ENCODE measurements at regions of chr16 and their contacts with region 1.

Region 1: DNA sequence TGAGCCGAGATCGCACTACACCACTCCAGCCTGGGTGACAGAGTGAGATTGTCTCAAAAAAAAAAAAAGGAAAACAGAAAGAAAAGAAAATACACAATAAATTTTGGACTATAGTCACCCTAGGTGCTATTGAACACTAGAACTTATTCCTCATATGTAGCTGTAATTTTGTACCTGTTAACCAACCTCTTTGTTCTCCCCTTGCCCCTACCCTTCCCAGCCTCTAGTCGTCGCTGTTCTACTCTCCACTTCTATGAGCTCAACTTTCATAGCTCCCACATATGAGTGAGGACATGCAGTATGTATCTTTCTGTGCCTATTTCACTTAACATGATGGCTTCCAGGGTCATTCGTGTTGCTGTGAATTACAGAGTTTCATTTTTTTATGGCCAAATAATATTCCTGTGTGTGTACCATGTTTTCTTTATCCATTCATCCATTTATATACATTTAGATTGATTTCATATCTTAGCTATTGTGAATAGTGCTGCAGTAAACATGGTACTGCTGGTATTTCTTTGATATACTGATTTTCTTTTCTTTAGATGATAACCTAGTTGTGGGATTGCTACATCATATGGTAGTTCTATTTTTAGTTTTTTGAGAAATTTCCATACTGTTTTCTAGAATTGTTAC is 28.3 kb downstream of the VPS35L start:
- DNase-seq: peak; percentile 51
- H3K4me3 ChIP-seq: no peak overlapping the region
- H3K27ac ChIP-seq: no peak overlapping the region
- H3K4me1 ChIP-seq: no peaks in the 10 kb centered on the region
- H3K27me3 ChIP-seq: no peaks in the 10 kb centered on the region
- CTCF ChIP-seq: peak; percentile 69
- EP300 ChIP-seq: no peak
- RAD21 ChIP-seq: peak; percentile 57

Region 2: GRCh38 chr16:19555162-19555937 is 28.4 kb before region 1 on chr16 and contains the start of gene VPS35L:
- CTCF ChIA-PET with region 1: interaction called, 10 read pairs
- POLR2A ChIA-PET with region 1: no interaction called
- DNase-seq: peak; percentile 93
- H3K4me3 ChIP-seq: peak within 1 kb of the TSS; percentile 73 to 86
- H3K27ac ChIP-seq: peak within 1 kb of the TSS; percentile 88 to 91
- H3K4me1 ChIP-seq: peaks cover 0 to 4% of the 10 kb centered on the region in 2 experiments; a peak in 1 of 4 replicates
- H3K27me3 ChIP-seq: no peaks in the 10 kb centered on the region
- CTCF ChIP-seq: peak; percentile 68
- EP300 ChIP-seq: no peak
- RAD21 ChIP-seq: peak; percentile 22; the same call in 1 of the 2 replicates
- polyA plus RNA-seq, gene VPS35L: 24.8 and 35.3 TPM in 2 replicates

Region 3: DNA sequence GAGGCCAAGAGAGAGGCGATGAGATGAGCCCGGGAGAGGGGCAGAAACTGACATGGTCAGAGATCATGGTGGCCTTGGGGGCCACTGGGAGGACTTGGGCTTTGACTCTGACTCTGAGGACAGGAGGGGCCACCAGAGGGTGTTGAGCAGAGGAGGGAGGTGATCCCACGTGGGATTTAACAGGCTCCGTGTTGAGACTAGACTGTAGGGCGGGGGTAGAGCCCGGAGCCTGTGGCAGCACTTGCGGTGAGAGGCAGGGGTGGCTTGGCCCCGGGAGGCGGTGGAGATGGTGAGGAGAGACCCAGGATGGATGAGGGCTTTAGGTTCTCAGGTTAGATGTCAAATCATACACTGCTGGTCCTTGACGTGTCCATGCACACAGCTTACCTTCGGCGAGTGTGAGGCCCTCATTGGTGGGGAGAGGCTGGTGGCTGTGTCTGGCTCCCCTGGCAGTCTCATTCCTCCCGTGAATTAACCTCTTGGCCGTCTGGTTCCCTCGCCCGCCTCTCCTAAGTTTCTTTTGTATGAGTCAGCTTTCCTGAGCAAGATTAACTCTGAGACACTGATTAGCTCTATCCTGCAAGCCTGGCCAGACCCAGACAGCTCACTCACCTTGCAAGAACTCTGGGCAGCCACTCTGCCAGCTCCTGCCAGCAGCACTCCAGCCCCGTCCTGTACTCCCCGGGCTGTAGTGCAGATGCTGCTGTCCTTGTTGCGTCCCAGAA is 11.4 kb after region 1 on chr16:
- CTCF ChIA-PET with region 1: interaction called, 27 read pairs
- POLR2A ChIA-PET with region 1: no interaction called
- DNase-seq: peak; percentile 10
- H3K4me3 ChIP-seq: no peak overlapping the region
- H3K27ac ChIP-seq: peak overlapping the region; percentile 45 to 78; a peak in 3 of 4 replicates
- H3K4me1 ChIP-seq: peaks cover 0 to 15% of the 10 kb centered on the region in 2 experiments; a peak in 3 of 4 replicates
- H3K27me3 ChIP-seq: no peaks in the 10 kb centered on the region
- CTCF ChIP-seq: no peak
- EP300 ChIP-seq: 0 out of 4 replicates have a peak, but pooled peaks of 1 of the 2 experiments have one; percentile 41
- RAD21 ChIP-seq: no peak

Region 4: DNA sequence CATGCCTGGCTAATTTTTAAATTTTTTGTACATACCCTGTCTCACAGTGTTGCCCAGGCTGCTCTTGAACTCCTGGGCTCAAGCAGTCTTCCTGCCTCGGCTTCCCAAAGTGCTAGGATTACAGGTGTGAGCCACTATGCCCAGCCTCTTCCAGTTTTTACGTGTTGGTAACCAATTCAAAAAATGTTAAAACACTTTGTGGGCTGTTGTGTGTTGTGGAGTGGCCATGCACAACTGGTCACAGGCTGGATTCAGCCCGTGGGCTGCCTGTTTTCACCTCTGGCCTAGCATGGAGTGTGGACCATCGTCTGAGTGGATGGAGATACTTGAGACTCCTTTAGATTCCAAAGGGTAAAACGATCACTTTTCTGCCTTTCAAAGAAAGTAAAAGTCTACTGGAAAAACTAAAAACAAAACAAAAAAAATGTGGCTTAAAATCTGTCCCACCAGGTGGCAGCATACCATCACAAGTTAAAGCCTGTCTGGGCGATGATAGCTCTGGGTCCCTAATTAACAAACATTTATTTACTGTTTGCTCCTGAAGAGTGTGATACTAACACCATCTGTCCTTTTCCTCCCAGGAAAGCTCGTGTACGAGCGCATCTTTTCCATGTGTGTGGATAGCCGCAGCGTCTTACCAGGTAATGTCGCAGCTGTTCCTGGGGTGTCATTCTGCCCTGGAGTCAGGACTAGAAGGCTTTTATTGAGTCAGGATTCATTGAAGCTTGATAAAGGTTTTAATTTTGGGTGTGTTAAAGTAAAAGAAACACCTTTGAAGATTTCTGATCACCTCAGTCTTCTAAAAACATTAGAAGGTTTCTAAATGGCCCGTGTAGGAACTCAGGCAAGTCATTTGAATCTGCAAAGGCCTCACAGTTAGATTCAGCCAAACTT is 17.5 kb after region 1 on chr16:
- CTCF ChIA-PET with region 1: interaction called, 27 read pairs
- POLR2A ChIA-PET with region 1: no interaction called
- DNase-seq: peak; percentile 47
- H3K4me3 ChIP-seq: peak overlapping the region in 1 of 2 experiments; percentile 25; a peak in 1 of 4 replicates
- H3K27ac ChIP-seq: no peak overlapping the region
- H3K4me1 ChIP-seq: no peaks in the 10 kb centered on the region
- H3K27me3 ChIP-seq: no peaks in the 10 kb centered on the region
- CTCF ChIP-seq: peak; percentile 75
- EP300 ChIP-seq: no peak
- RAD21 ChIP-seq: peak; percentile 82